Cardiac septum (tissue), 1 donor: ENCODE measurements at regions of chr1 and their contacts with region 1.

Region 1: GRCh38 chr1:34852677-34853217 is 6.8 kb downstream of the SMIM12 start:
- DNase-seq: peak; percentile 91

Region 2: GRCh38 chr1:35298464-35298863 is 445.7 kb after region 1 on chr1:
- intact Hi-C with region 1: loop called (anchors 10 kb)
- DNase-seq: no peak